CD4-positive, alpha-beta memory T cell (primary cell): ENCODE measurements at regions of chr17 and their contacts with region 1.

Region 1: GRCh38 chr17:82022981-82023374 is at the start of gene LRRC45:
- DNase-seq: peak; percentile 99 to 100 (median 100)
- H3K4me3 ChIP-seq: peak within 1 kb of the TSS; percentile 44 to 72
- H3K4me3 Mint-ChIP-seq: peak within 1 kb of the TSS; percentile 81 to 89 (median 86)
- H3K27ac ChIP-seq: peak within 1 kb of the TSS; percentile 65
- H3K27ac Mint-ChIP-seq: peak within 1 kb of the TSS in 6 of 7 donors; percentile 68 to 89 (median 78)
- H3K4me1 ChIP-seq: peaks cover 28% of the 10 kb centered on the region
- H3K4me1 Mint-ChIP-seq: peaks cover 3 to 30% (median 18%) of the 10 kb centered on the region in 4 donors
- H3K27me3 ChIP-seq: no peaks in the 10 kb centered on the region
- H3K27me3 Mint-ChIP-seq: no peaks in the 10 kb centered on the region
- total RNA-seq, gene LRRC45: 18.0 to 18.7 TPM

Region 2: GRCh38 chr17:81967533-81968395 is 55.2 kb before region 1 on chr17:
- CTCF ChIA-PET with region 1: interaction called, 13 read pairs
- POLR2A ChIA-PET with region 1: interaction called, 22 read pairs
- intact Hi-C with region 1: no loop called
- DNase-seq: peak; percentile 85 to 92 (median 86)
- H3K4me3 ChIP-seq: peak overlapping the region in 1 of 2 donors; percentile 46
- H3K4me3 Mint-ChIP-seq: peak overlapping the region; percentile 55 to 79 (median 66)
- H3K27ac ChIP-seq: peak overlapping the region; percentile 39
- H3K27ac Mint-ChIP-seq: peak overlapping the region in 6 of 7 donors; percentile 66 to 93 (median 84)
- H3K4me1 ChIP-seq: peaks cover 22% of the 10 kb centered on the region
- H3K4me1 Mint-ChIP-seq: peaks cover 3 to 20% (median 7%) of the 10 kb centered on the region in 4 donors
- H3K27me3 ChIP-seq: peaks cover 1% of the 10 kb centered on the region
- H3K27me3 Mint-ChIP-seq: peaks cover 0 to 3% of the 10 kb centered on the region in 2 donors

Region 3: DNA sequence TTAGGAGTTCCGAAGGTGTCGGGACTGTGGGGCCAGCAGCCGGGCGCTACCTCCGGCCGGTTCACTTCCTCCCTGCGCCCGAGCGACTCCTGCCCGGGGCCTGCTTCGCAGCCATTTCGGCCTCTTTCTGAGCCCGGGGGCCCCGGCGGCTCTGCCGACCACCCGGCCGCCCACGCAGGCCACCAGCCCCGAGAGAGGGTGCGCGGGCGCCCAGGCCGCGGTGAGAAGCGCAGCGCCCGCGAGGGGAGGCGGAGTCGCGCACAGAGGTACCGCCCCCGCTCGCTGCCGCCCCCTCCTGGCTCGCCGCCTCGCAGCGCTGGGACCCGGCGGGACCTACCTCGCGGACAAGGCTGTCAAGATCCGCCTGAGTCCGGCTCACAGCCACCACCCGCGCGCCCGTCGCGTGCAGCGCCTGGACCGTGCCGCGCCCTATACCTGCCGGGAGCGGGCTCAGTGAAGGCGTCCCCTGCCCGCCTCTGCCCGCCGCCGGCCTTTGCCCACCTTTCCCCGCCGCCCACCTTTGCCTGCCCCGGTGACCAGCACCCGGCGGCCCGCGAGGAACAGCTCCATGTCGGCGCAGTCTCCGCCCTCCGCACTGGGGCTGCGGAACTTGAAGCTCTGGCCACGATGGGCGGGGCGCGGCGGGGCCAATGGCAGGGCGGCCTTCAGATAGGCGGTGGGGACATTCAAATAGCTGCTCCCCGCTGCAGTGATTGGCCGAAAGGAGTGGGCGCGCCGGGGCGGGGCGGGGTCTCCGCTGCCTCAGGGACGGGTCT is 14.3 kb after region 1 on chr17 and contains the start of gene DCXR:
- CTCF ChIA-PET with region 1: interaction called, 9 read pairs
- POLR2A ChIA-PET with region 1: interaction called, 21 read pairs
- intact Hi-C with region 1: loop called (anchors 1 kb)
- DNase-seq: peak; percentile 95 to 96 (median 95)
- H3K4me3 ChIP-seq: peak within 1 kb of the TSS; percentile 52 to 80
- H3K4me3 Mint-ChIP-seq: peak within 1 kb of the TSS; percentile 87 to 95 (median 90)
- H3K27ac ChIP-seq: peak within 1 kb of the TSS; percentile 57
- H3K27ac Mint-ChIP-seq: peak within 1 kb of the TSS; percentile 87 to 96 (median 93)
- H3K4me1 ChIP-seq: peaks cover 19% of the 10 kb centered on the region
- H3K4me1 Mint-ChIP-seq: peaks cover 13 to 36% (median 18%) of the 10 kb centered on the region in 4 donors
- H3K27me3 ChIP-seq: no peaks in the 10 kb centered on the region
- H3K27me3 Mint-ChIP-seq: no peaks in the 10 kb centered on the region
- total RNA-seq, gene DCXR: 65.9 to 68.2 TPM

Region 4: GRCh38 chr17:82098072-82098821 is 75.3 kb after region 1 on chr17 and contains the start of gene FASN:
- CTCF ChIA-PET with region 1: no interaction called
- POLR2A ChIA-PET with region 1: interaction called, 13 read pairs
- intact Hi-C with region 1: loop called (anchors 5 kb)
- DNase-seq: peak; percentile 88 to 94 (median 91)
- H3K4me3 ChIP-seq: peak within 1 kb of the TSS; percentile 23 to 66
- H3K4me3 Mint-ChIP-seq: peak within 1 kb of the TSS; percentile 35 to 82 (median 68)
- H3K27ac ChIP-seq: peak within 1 kb of the TSS; percentile 78
- H3K27ac Mint-ChIP-seq: peak within 1 kb of the TSS in 4 of 7 donors; percentile 22 to 86 (median 26)
- H3K4me1 ChIP-seq: peaks cover 20% of the 10 kb centered on the region
- H3K4me1 Mint-ChIP-seq: peaks cover 0 to 20% (median 2%) of the 10 kb centered on the region in 4 donors
- H3K27me3 ChIP-seq: no peaks in the 10 kb centered on the region
- H3K27me3 Mint-ChIP-seq: no peaks in the 10 kb centered on the region
- total RNA-seq, gene FASN: 26.5 to 27.7 TPM

Region 5: DNA sequence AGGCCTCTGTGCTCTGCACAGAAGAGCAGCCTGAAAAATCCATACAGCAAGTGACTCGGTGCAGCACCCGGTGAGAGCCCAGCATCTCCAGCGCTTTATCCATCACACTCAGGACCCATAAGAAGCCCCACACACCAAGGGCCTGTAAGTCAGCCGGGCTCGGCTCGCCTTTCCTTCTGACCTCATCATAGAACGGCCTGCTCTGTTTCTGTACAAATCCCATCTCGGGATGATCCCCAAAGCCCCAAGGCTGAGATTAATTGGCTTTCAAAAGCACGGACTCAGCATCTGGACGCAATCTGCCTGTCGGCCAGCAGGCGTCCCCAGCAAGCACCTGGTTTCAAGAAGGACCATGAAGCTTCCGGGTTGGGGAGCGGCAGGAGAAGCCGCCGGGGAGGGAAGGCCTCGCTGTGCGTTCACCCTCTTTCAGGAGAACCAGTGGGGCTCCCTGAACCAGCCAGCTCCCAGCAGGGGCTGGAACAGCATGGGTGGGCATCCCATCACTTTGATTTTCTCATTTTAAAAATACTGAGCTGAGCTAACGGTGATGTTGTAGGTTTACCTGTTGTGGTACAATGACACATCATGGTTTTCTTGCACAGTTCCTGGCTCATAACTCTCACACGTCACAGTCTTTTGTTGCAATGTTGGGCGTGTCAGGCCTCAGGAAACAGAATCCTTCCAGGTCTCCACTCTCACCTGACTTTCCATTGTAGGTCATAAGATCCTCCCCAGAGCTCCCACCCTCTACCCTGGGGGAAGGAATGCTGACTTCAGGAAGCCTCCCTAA is 182.9 kb after region 1 on chr17:
- CTCF ChIA-PET with region 1: no interaction called
- POLR2A ChIA-PET with region 1: interaction called, 3 read pairs
- intact Hi-C with region 1: loop called (anchors 5 kb)
- DNase-seq: peak; percentile 84 to 87 (median 86)
- H3K4me3 ChIP-seq: no peak overlapping the region
- H3K4me3 Mint-ChIP-seq: peak overlapping the region in 7 of 8 donors; percentile 39 to 81 (median 54)
- H3K27ac ChIP-seq: peak overlapping the region; percentile 61
- H3K27ac Mint-ChIP-seq: peak overlapping the region; percentile 96 to 99 (median 97)
- H3K4me1 ChIP-seq: peaks cover 26% of the 10 kb centered on the region
- H3K4me1 Mint-ChIP-seq: peaks cover 20 to 46% (median 33%) of the 10 kb centered on the region in 4 donors
- H3K27me3 ChIP-seq: no peaks in the 10 kb centered on the region
- H3K27me3 Mint-ChIP-seq: no peaks in the 10 kb centered on the region